K562 (cell line): ENCODE measurements at regions of chr6 and their contacts with region 1.

Region 1: DNA sequence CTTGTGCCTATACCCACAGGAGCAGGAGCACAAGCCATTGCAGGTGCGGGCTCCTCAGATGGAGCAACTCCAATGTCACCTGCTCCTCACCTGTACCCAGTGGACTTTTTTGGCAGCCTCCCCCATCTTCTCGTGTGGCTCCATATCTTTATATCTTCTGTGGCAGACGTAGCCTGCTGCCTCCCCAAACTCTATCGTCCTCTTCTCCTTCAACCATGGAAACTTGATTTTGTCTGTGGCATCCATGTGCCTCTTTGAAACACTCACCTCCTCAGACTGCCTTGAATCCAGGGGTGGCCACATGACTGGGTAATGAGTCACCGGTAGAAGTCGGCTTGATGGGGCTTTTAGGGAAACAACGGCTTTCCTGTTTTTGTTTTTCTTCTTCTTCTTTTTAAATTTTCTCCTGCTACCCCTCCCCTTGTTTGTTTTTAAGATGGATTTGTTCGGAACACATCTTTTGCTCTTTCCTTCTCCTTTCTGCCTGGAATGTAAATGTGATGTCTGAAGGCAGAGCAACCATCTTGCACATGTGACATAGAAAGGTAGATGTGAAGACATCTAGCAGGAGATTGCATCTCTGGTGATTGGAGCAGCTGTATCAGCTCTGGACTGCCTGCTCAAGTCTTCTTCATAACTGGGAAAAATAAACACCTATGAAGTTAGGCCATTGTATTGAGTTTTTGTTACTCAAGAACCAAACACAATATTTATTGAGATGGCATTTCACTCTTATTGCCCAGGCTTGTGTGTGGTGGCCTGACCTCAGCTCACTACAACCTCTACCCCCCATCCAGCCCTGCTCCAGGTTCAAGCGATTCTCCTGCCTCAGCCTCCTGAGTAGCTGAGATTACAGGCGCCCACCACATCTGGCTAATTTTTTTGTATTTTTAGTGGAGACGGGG is 69.9 kb upstream of the DDR1 start:
- DNase-seq: peak; percentile 60 to 84 (median 64)
- ATAC-seq: peak; percentile 76
- H3K4me3 ChIP-seq: no peak overlapping the region
- H3K27ac ChIP-seq: peak overlapping the region; percentile 70
- H3K4me1 ChIP-seq: peaks cover 43 to 55% of the 10 kb centered on the region in 2 experiments
- H3K27me3 ChIP-seq: no peaks in the 10 kb centered on the region
- CTCF ChIP-seq: no peak
- EP300 ChIP-seq: peak; percentile 72
- POLR2A ChIP-seq: no peak
- RAD21 ChIP-seq: no peak; a peak in 2 of 4 replicates

Region 2: DNA sequence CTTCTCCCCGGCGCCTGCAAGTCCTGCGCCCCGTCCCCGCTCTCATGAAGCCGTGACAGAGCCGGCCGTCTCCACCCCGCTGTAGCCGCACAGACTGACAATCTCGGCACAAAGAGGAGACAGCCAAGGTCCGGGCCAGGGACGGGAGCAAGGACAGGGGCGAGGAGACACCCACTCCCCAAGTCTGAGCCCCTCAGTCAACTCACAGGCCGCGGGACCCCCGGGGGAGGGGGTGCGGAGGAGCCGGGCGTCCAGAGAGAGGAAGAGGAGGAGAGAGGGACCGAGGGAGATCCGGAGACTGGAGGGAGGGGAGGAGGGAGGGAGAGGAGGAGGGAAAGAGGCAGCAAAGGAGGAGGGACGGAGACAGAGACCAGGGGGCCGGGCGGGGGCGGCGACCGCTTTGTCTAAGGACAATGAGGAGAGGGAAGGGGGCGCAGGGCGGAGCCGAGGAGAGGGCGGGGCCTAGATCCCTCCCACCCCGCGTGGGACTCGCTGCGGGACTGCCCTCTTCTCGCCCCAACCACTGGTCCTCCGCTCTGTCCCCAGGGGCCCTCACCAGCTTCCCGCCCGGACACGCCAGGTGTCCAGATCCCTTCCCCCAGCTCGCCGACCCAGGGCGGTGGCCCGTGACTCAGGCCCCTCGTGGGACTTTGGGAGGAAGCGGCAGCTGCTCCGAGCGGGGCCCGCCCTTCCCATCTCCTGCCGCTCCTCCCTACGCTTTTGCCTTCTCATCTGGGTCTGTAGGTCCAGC is 127.3 kb before region 1 on chr6:
- CTCF ChIA-PET with region 1: no interaction called
- POLR2A ChIA-PET with region 1: no interaction called
- in situ Hi-C with region 1: no loop called
- intact Hi-C with region 1: loop called (anchors 10 kb)
- DNase-seq: peak; percentile 90 to 96 (median 92)
- ATAC-seq: peak; percentile 59
- H3K4me3 ChIP-seq: peak overlapping the region; percentile 81
- H3K27ac ChIP-seq: peak overlapping the region; percentile 88
- H3K4me1 ChIP-seq: peaks cover 50 to 88% of the 10 kb centered on the region in 2 experiments
- H3K27me3 ChIP-seq: no peaks in the 10 kb centered on the region
- CTCF ChIP-seq: no peak
- EP300 ChIP-seq: peak; percentile 63; the same call in 1 of the 2 replicates
- POLR2A ChIP-seq: peak; percentile 76
- RAD21 ChIP-seq: no peak

Region 3: GRCh38 chr6:30742316-30743098 is 71.9 kb before region 1 on chr6 and contains the start of gene FLOT1:
- CTCF ChIA-PET with region 1: no interaction called
- POLR2A ChIA-PET with region 1: interaction called, 4 read pairs
- in situ Hi-C with region 1: loop called (anchors 5 kb)
- intact Hi-C with region 1: loop called (anchors 1 kb)
- DNase-seq: peak; percentile 97 to 98 (median 97)
- ATAC-seq: peak; percentile 92
- H3K4me3 ChIP-seq: peak within 1 kb of the TSS; percentile 91
- H3K27ac ChIP-seq: peak within 1 kb of the TSS; percentile 87
- H3K4me1 ChIP-seq: peaks cover 38 to 47% of the 10 kb centered on the region in 2 experiments
- H3K27me3 ChIP-seq: no peaks in the 10 kb centered on the region
- CTCF ChIP-seq: 0 out of 6 replicates have a peak, but pooled peaks of 1 of the 3 experiments have one; percentile 2
- EP300 ChIP-seq: peak; percentile 36
- POLR2A ChIP-seq: peak; percentile 81
- RAD21 ChIP-seq: peak in 1 of 2 experiments; percentile 41; a peak in 3 of 4 replicates
- polyA plus RNA-seq, gene FLOT1: 11.7 to 12.0 TPM

Region 4: GRCh38 chr6:30752157-30752927 is 62.0 kb before region 1 on chr6:
- CTCF ChIA-PET with region 1: no interaction called
- POLR2A ChIA-PET with region 1: interaction called, 4 read pairs
- in situ Hi-C with region 1: loop called (anchors 5 kb)
- intact Hi-C with region 1: no loop called
- DNase-seq: peak in 1 of 4 experiments; percentile 43
- ATAC-seq: peak; percentile 74
- H3K4me3 ChIP-seq: no peak overlapping the region
- H3K27ac ChIP-seq: peak overlapping the region; percentile 14; the same call in 1 of the 3 replicates
- H3K4me1 ChIP-seq: peaks cover 12 to 26% of the 10 kb centered on the region in 2 experiments
- H3K27me3 ChIP-seq: no peaks in the 10 kb centered on the region
- CTCF ChIP-seq: no peak
- EP300 ChIP-seq: no peak
- POLR2A ChIP-seq: no peak
- RAD21 ChIP-seq: no peak

Region 5: DNA sequence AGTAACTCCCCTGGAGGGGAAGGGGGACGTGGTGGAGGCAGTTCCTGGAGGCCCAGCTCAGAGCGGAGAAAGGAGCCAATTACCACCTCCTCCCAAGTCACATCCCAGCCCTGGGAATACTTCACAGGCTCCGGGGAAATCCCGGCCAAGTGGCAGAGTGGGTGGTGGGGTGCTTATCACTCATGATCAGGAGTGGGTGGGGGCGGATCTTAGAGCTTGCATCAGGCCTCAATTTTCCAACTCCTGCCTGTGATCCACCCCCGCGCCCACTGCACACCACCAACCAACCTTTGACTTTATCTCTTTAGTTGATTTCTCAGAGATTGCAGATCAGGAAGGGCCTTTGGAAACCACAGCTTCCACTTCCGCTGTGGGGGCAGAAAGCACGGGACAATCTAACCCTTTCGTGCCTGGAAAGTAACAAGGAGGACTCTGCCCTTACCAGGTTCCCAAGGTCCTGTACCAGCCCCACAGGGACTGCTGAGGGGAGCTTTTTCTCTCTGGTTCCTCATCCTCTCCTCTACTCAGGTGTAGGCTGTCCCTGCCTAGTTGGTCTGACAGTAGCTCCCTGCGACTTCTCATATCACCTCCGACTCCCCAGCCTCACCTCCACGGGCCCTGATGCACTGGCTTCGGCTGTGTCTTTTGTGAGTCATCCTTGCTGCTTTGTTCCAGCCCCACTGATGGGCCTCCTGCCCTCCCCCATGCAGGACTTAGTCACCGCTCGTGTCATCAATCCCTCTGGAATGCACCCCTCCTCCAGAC is 45.1 kb before region 1 on chr6:
- CTCF ChIA-PET with region 1: no interaction called
- POLR2A ChIA-PET with region 1: interaction called, 11 read pairs
- in situ Hi-C with region 1: no loop called
- intact Hi-C with region 1: loop called (anchors 5 kb)
- DNase-seq: peak; percentile 90 to 93 (median 92)
- ATAC-seq: peak; percentile 90
- H3K4me3 ChIP-seq: peak overlapping the region; percentile 16; the same call in 1 of the 2 replicates
- H3K27ac ChIP-seq: peak overlapping the region; percentile 92
- H3K4me1 ChIP-seq: peaks cover 36 to 49% of the 10 kb centered on the region in 2 experiments
- H3K27me3 ChIP-seq: no peaks in the 10 kb centered on the region; a peak in 1 of 5 replicates
- CTCF ChIP-seq: no peak
- EP300 ChIP-seq: peak; percentile 88
- POLR2A ChIP-seq: no peak; the same call in 1 of the 2 replicates
- RAD21 ChIP-seq: peak; percentile 16 to 39

Region 6: GRCh38 chr6:30781743-30782424 is 32.5 kb before region 1 on chr6:
- CTCF ChIA-PET with region 1: no interaction called
- POLR2A ChIA-PET with region 1: interaction called, 12 read pairs
- in situ Hi-C with region 1: no loop called
- intact Hi-C with region 1: no loop called
- DNase-seq: peak; percentile 88 to 97 (median 91)
- ATAC-seq: peak; percentile 79
- H3K4me3 ChIP-seq: peak overlapping the region; percentile 21
- H3K27ac ChIP-seq: peak overlapping the region; percentile 91
- H3K4me1 ChIP-seq: peaks cover 45 to 54% of the 10 kb centered on the region in 2 experiments
- H3K27me3 ChIP-seq: no peaks in the 10 kb centered on the region
- CTCF ChIP-seq: no peak
- EP300 ChIP-seq: peak; percentile 88
- POLR2A ChIP-seq: peak; percentile 78
- RAD21 ChIP-seq: peak; percentile 3 to 31; a peak in 1 of 4 replicates

Region 7: DNA sequence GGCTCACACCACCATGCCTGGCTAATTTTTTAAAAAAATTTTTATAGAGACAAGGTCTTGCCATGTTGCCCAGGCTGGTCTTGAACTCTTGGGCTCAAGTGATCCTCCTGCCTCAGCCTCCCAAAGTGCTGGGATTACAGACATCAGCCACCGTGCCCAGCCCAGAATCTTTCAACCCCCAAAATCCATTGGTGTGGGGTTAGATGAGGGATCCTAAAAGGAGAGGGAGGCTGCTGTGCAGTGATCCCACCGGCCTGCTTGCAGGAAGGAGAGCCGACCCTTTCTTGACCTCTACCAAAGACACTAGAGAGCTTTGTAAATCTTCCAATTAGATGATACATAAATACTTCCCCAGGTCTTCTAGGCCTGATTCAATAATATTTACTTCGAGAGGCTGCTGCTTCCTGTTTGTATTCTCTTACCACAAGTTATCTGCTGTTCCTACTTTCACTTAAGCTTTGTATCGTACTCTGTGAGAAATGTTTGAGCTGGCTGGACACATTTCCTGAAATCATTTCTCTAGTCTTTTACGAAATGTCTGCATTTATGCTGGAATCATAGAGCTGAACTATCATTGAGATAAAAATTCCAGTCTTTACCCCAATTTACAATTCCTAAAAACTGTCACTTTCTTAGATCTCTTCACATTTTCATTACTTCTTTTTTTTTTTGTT is 20.7 kb before region 1 on chr6:
- CTCF ChIA-PET with region 1: no interaction called
- POLR2A ChIA-PET with region 1: interaction called, 11 read pairs
- in situ Hi-C with region 1: no loop called
- intact Hi-C with region 1: no loop called
- DNase-seq: no peak
- ATAC-seq: peak; percentile 44
- H3K4me3 ChIP-seq: no peak overlapping the region
- H3K27ac ChIP-seq: peak overlapping the region; percentile 66
- H3K4me1 ChIP-seq: peaks cover 5 to 27% of the 10 kb centered on the region in 2 experiments
- H3K27me3 ChIP-seq: no peaks in the 10 kb centered on the region
- CTCF ChIP-seq: no peak
- EP300 ChIP-seq: no peak
- POLR2A ChIP-seq: no peak
- RAD21 ChIP-seq: no peak

Region 8: DNA sequence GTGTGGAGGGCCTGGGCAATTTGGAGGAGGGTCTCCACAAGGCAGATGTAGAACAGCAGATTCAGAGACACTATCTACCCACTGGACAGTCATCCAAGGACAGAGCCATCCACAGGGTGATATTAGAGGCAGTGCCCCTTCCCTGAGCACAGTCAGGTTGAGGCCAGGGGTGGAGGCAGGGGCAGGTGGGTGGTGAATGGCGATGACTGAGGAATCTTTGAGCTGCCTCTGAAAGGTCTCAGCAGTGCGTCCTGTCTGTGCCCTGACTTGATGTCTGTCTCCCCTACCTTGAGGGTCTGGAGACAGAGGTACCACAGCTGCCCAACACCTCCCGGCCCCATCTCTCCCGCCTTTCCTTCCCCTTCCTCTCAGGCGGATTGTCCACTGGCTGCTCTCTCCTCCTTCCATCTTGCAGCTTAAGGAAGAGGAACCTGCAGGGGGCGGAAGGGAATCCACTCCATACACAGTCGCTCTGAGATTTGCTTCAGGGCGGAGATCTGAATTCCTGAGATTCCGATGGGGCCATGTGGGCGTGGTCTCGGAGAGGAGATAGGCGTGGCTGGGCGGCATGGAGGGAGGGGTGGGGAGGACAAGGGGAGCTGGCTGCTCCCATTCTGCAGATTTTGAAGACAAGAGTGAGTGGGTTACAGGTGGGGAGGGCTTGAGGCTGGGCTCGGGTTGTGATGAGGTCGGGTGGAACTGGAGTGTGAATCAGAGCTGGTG is 128.1 kb after region 1 on chr6:
- CTCF ChIA-PET with region 1: no interaction called
- POLR2A ChIA-PET with region 1: no interaction called
- in situ Hi-C with region 1: no loop called
- intact Hi-C with region 1: no loop called
- DNase-seq: peak; percentile 83 to 91 (median 84)
- ATAC-seq: peak; percentile 94
- H3K4me3 ChIP-seq: no peak overlapping the region
- H3K27ac ChIP-seq: no peak overlapping the region
- H3K4me1 ChIP-seq: peaks cover 8 to 11% of the 10 kb centered on the region in 2 experiments
- H3K27me3 ChIP-seq: peaks cover 37 to 80% of the 10 kb centered on the region in 2 experiments
- CTCF ChIP-seq: peak; percentile 57 to 63 (median 61)
- EP300 ChIP-seq: 0 out of 2 replicates have a peak, but pooled peaks have one; percentile 6
- POLR2A ChIP-seq: no peak
- RAD21 ChIP-seq: peak; percentile 25 to 64; a peak in 3 of 4 replicates

Region 9: GRCh38 chr6:31075528-31075927 is 261.1 kb after region 1 on chr6:
- CTCF ChIA-PET with region 1: no interaction called
- POLR2A ChIA-PET with region 1: no interaction called
- in situ Hi-C with region 1: no loop called
- intact Hi-C with region 1: no loop called
- DNase-seq: no peak
- ATAC-seq: no peak
- H3K4me3 ChIP-seq: no peak overlapping the region
- H3K27ac ChIP-seq: no peak overlapping the region
- H3K4me1 ChIP-seq: peaks cover 0 to 7% of the 10 kb centered on the region in 2 experiments; a peak in 3 of 5 replicates
- H3K27me3 ChIP-seq: no peaks in the 10 kb centered on the region
- CTCF ChIP-seq: no peak
- EP300 ChIP-seq: no peak
- POLR2A ChIP-seq: no peak
- RAD21 ChIP-seq: no peak